ENCODE measurements at regions of chr6 and their contacts with region 1.

Region 1: GRCh38 chr6:91288741-91289140 is 701.9 kb upstream of the MAP3K7 start:
- DNase-seq: peak; percentile 61
- H3K4me3 ChIP-seq: no peak overlapping the region
- H3K27ac ChIP-seq: no peak overlapping the region
- H3K4me1 ChIP-seq: no peaks in the 10 kb centered on the region
- H3K27me3 ChIP-seq: no peaks in the 10 kb centered on the region
- CTCF ChIP-seq: no peak

Region 2: GRCh38 chr6:91852252-91852651 is 563.5 kb after region 1 on chr6:
- CTCF ChIA-PET with region 1: no interaction called
- POLR2A ChIA-PET with region 1: no interaction called
- intact Hi-C with region 1: loop called (anchors 10 kb)
- DNase-seq: peak; percentile 79
- H3K4me3 ChIP-seq: peak overlapping the region; percentile 11
- H3K27ac ChIP-seq: peak overlapping the region; percentile 93
- H3K4me1 ChIP-seq: peaks cover 38% of the 10 kb centered on the region
- H3K27me3 ChIP-seq: no peaks in the 10 kb centered on the region
- CTCF ChIP-seq: no peak